GM23248 (cell line): ENCODE measurements at regions of chr3 and their contacts with region 1.

Region 1: DNA sequence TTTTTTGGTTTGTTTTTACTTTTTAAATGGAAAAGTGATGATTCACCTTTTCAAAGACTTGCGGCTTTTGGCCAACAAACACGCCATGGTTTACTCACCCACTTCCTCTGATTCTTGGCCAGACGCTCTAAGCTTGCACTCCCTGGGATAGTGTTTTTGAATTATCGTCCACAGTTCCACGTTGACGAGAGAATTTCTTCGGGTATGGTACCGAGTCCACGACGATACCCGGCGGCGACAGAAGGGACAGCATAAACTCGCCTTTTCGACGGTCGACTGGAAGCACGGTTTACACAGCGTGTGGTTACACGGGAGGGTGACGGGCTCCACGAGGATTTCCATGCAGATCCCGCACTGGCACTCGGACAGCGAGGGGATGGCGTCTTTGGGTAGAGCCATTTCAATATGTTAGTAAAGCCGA is 783 bp downstream of the RNF168 start:
- DNase-seq: peak; percentile 98
- H3K4me3 ChIP-seq: peak overlapping the region; percentile 91
- H3K27ac ChIP-seq: peak overlapping the region; percentile 95
- H3K4me1 ChIP-seq: peaks cover 22% of the 10 kb centered on the region
- H3K27me3 ChIP-seq: no peaks in the 10 kb centered on the region

Region 2: DNA sequence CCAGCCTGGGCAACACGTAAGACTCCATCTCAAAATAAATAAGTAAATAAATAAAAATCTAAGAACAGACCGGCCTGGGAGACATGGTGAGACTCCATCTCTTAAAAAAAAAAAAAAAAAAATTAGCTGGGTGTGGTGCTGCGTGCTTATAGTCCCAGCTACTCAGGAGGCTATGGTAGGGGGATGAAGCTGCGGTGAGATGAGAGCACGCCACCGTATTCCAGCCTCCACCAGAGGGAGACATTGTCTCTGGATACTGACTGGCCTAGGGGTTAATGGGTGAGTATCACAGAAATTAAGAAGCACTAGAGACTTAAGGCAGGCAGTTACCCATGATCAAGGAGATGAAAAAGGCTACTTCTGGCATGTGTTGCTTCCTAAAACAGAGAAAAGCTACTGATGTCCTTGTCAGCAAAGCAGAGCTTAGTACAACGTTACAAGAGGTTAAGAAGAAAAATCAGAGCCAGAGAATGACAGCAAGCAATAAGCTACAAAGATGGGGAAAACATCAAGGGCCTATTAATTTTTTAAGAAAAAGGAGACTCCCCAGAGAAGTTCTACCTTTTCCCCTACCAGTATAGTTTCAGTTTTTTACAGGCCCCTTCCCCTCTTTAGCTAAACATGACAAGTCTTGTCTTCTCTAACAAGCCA is 429.5 kb before region 1 on chr3:
- in situ Hi-C with region 1: loop called (anchors 25 kb)
- DNase-seq: peak; percentile 65
- H3K4me3 ChIP-seq: no peak overlapping the region
- H3K27ac ChIP-seq: no peak overlapping the region
- H3K4me1 ChIP-seq: no peaks in the 10 kb centered on the region
- H3K27me3 ChIP-seq: no peaks in the 10 kb centered on the region

Region 3: DNA sequence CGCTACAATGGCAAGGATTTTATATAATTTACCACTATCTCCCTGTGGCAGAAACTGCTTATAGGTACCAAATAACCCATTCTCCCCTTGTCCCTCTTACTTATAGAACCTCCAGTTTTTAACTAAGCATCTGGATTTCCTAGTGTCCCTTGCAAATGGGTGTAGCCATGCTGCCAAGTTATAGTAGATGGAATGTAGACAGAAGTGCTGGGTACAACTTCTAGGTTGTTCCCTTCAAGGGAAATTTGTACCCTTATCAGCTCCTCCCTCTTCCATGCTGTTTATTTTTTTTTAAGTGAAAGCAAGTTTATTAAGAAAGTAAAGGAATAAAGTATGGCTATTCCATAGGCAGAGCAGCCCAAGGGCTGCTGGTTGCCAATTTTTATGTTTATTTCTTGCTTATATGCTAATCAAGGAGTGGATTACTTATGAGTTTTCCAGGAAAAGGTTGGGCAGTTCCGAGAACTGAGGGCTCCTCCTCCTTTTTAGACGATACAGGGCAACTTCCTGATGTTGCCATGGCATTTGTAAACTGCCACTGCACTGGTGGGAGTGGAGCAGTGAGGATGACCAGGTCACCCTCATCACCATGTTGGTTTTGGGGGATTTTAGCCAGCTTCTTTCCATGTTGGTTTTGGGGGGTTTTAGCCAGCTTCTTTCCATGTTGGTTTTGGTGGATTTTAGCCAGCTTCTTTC is 124.5 kb before region 1 on chr3:
- in situ Hi-C with region 1: no loop called
- DNase-seq: no peak
- H3K4me3 ChIP-seq: no peak overlapping the region
- H3K27ac ChIP-seq: no peak overlapping the region
- H3K4me1 ChIP-seq: no peaks in the 10 kb centered on the region
- H3K27me3 ChIP-seq: no peaks in the 10 kb centered on the region